Activated CD4-positive, alpha-beta memory T cell treated with anti-CD3 and anti-CD28 coated beads for 36 hours (primary cell): ENCODE measurements at regions of chr15 and their contacts with region 1.

Region 1: GRCh38 chr15:58331903-58332675 is 99.7 kb upstream of the LIPC start:
- DNase-seq: peak; percentile 96
- H3K4me3 Mint-ChIP-seq: peak overlapping the region; percentile 23
- H3K27ac Mint-ChIP-seq: peak overlapping the region; percentile 91
- H3K4me1 Mint-ChIP-seq: peaks cover 41% of the 10 kb centered on the region
- H3K27me3 Mint-ChIP-seq: no peaks in the 10 kb centered on the region

Region 2: DNA sequence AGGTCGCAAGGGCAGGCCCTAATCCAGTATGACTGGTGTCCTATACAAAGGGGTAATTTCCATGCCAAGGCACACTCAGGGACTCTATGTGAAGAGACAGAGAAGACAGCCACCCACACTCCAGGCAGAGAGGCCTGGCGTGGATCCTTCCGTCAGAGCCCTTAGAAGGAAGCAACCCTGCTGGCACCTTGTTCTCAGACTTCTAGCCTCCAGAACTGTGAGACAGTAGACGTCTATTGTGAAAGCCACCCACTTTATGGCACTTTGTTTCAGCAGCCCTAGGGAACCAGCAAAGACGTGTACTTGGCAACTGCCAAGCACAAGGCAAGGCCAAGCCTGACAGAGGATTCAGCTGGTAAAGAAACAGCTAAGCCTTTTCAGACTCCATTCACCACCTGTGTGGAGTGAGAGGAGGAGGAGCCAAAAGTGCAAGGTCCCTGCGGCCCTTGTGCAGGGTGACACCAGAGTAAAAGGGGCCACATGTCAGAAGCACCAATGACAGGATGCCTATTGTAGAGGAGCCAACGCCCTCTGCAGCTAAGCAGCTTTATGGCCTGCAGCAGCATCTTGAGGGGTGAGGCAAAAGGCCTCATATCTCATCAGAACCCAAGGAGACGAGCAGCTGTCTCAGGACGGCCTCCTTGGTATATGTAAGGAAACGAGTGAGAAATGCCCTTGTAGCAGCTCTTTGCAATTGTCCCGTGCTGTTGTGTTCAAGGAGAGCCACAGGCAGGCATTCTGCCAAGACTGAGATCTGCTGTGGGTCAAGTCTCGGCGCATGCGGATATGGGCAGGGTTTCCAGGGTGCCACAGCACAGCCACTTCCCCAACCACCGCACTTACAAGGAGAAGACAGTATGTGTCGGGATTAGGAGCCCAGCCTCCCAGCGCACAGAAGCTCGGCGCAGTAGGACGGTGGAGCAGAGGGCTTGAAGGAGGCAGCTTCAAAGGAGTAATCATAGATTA is 21.8 kb before region 1 on chr15:
- CTCF ChIA-PET with region 1: interaction called, 4 read pairs
- POLR2A ChIA-PET with region 1: interaction called, 7 read pairs
- intact Hi-C with region 1: loop called (anchors 1 kb)
- DNase-seq: no peak
- H3K4me3 Mint-ChIP-seq: no peak overlapping the region
- H3K27ac Mint-ChIP-seq: no peak overlapping the region
- H3K4me1 Mint-ChIP-seq: peaks cover 19% of the 10 kb centered on the region
- H3K27me3 Mint-ChIP-seq: no peaks in the 10 kb centered on the region

Region 3: DNA sequence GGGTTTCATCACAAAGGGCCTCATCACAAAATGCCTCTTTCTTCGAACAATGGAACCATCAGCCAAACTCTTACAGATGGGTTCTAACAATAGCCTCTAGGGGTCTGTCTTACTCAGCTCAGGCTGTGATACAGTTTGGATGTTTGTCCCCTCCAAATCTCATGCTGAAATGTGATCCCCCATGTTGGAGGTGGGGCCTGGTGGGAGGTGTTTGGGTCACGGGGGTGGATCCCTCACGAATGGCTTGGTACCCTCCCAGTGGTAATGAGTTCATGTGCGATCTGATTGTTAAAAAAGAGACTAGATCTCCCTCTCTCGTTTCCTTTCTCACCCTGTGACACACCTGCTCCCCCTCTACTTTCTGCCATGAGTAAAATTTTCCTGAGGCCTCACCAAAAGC is 51.8 kb after region 1 on chr15:
- CTCF ChIA-PET with region 1: no interaction called
- POLR2A ChIA-PET with region 1: interaction called, 5 read pairs
- intact Hi-C with region 1: loop called (anchors 1 kb)
- DNase-seq: peak; percentile 70
- H3K4me3 Mint-ChIP-seq: no peak overlapping the region
- H3K27ac Mint-ChIP-seq: peak overlapping the region; percentile 53
- H3K4me1 Mint-ChIP-seq: peaks cover 10% of the 10 kb centered on the region
- H3K27me3 Mint-ChIP-seq: no peaks in the 10 kb centered on the region

Region 4: DNA sequence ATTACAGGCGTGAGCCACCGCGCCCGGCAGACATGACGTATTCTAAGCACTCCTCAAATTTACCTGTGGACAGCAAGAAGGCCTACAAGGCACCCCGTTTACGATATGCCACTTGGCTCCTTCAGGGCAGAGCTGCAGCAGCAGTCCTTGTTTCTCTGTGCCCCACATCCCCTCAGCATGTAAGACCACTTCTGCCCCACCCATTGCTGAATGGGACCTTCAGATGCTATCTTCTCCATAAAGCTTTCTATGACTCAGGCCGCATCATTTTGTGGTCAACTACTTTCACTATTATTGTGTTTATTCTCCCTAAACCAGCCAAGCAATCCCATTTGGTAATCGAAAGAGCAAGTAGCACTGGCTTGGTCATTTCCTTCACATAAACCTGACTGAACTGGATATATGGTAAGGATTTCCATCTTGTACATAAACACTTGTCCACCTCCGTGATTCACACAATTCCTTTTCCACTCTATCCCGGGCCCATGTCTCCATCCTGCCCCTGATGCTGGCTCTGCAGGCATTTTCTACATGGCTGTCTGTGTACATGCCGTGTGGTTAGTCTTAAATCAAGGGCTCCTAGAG is 125.4 kb after region 1 on chr15:
- CTCF ChIA-PET with region 1: no interaction called
- POLR2A ChIA-PET with region 1: no interaction called
- intact Hi-C with region 1: loop called (anchors 5 kb)
- DNase-seq: peak; percentile 53
- H3K4me3 Mint-ChIP-seq: no peak overlapping the region
- H3K27ac Mint-ChIP-seq: peak overlapping the region; percentile 66
- H3K4me1 Mint-ChIP-seq: peaks cover 47% of the 10 kb centered on the region
- H3K27me3 Mint-ChIP-seq: no peaks in the 10 kb centered on the region

Region 5: DNA sequence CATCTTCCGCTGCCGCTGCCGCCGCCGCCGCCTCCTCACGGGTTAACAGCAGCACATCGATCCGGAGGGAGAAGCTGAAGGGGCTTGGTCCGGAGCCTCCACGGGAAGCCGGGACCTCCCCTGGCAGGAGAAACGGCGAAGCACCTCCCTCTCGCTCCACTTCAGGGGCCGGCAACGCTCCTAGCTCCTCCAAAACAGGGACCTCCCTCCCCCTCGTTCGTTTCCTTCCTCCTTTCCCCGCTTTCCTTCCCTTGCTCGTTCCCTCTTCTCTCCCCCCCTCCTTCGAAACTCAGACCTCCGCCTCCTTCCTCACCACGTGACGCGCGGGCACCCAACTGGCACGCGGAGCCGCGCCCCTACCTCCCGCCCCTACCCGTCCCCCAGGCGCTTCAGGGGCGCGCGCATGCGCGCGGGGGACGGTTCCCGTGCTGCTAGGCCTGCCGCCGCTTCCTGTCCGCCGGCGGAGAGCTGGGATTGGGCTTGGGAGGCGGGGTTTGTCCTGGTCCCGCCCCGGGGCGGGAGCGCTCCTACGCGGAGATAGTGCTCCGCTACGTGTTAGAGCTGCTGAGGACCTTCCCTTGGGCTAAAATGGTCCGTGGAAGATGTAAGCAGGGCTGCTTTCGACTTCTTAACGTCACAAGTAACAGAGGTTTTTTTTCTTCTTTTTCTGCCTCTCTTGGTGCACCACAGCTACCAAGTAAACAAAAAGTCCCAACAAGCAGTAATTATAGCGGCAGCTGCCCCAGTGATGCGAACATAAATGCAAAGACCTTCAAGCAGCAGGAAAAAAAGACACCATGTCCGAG is 417.6 kb after region 1 on chr15 and contains the start of gene ADAM10:
- CTCF ChIA-PET with region 1: no interaction called
- POLR2A ChIA-PET with region 1: no interaction called
- intact Hi-C with region 1: loop called (anchors 10 kb)
- DNase-seq: peak; percentile 99
- H3K4me3 Mint-ChIP-seq: peak within 1 kb of the TSS; percentile 92
- H3K27ac Mint-ChIP-seq: peak within 1 kb of the TSS; percentile 91
- H3K4me1 Mint-ChIP-seq: peaks cover 29% of the 10 kb centered on the region
- H3K27me3 Mint-ChIP-seq: no peaks in the 10 kb centered on the region
- total RNA-seq, gene ADAM10: 80.1 to 82.3 TPM

Region 6: DNA sequence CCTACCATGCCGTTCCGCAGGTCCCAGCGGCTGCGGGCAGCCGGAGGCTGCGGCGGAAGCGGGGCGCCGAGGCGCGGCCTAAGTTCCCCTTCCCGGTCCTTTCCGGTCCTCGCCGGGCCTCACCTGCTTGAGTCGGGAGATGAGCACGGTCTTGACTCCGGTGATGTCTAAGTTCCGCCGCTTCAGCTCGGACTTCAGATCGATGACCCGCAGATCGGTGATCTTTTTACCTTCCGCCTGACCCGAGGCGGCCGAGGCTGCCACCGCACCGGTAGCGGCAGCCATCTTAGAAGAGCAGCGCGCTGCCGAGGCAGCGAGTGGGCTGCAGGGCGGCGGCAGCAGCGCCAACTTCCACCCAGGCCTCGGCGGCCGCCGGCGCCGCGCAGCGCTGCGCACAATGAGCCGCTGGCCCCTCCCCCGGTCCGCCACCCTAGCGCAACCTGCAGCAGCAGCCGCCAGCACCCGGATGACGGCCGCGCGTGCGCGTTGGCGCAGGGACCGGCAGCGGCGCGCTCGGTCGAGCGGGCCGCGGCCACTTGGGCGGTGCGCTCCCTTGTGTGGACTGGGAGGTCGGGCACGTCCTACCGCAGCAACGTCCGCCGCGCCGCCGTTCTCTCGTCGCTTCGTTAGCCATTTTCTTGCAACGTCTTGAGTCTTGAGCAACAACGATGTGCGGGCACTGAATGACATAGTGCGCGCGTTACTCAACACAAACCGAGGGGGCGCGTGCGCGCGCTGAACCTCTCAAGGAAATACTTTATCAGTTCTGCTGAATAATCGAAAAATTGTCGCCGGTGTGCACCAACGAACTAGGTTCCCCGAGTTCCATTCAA is 601.4 kb after region 1 on chr15 and contains the start of gene SLTM:
- CTCF ChIA-PET with region 1: no interaction called
- POLR2A ChIA-PET with region 1: no interaction called
- intact Hi-C with region 1: loop called (anchors 10 kb)
- DNase-seq: peak; percentile 94
- H3K4me3 Mint-ChIP-seq: peak within 1 kb of the TSS; percentile 96
- H3K27ac Mint-ChIP-seq: peak within 1 kb of the TSS; percentile 99
- H3K4me1 Mint-ChIP-seq: peaks cover 21% of the 10 kb centered on the region
- H3K27me3 Mint-ChIP-seq: no peaks in the 10 kb centered on the region
- total RNA-seq, gene SLTM: 75.7 to 79.2 TPM